Ascending aorta (tissue), 2 donors: ENCODE measurements at regions of chr6 and their contacts with region 1.

Region 1: DNA sequence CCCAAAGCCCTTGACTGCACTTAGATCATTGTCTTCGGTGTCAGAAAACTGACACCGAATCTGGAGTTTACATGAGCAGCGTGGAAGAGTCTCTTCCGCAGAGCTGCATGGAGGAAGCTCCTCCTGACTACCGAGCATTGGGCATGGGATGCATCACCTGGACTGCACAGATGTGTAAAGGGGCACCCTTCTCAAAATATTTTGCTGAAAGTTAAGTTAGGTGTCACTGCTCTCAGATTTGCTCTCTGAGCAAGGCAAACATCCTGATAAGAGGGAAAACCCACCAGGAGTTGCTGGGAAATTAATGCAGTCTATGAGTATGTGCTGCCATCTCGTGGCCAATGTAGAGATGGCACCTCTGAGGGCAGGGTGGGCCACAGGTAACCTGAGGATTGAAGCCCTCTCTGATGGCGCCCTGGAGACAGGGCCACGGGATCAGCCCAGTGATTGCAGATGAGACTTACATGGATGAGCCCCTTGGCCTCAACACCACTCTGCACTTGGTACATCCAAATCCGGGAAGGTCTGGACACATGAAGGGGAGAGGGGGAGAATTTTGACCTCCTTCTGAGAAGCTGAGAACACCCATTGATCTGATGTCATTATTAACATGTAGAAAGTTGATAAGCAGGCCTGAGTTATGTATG is 129.9 kb downstream of the LPA start:
- DNase-seq: peak in 1 of 2 donors; percentile 80
- H3K4me3 ChIP-seq: peak overlapping the region in 1 of 2 donors; percentile 39
- H3K27ac ChIP-seq: no peak overlapping the region
- H3K4me1 ChIP-seq: peaks cover 0 to 3% of the 10 kb centered on the region in 2 donors
- H3K27me3 ChIP-seq: no peaks in the 10 kb centered on the region
- CTCF ChIP-seq: peak; percentile 75 to 96 (median 87)

Region 2: GRCh38 chr6:160520043-160520904 is 13.9 kb before region 1 on chr6:
- intact Hi-C with region 1: loop called (anchors 1 kb)
- DNase-seq: peak in 1 of 2 donors; percentile 89
- H3K4me3 ChIP-seq: peak overlapping the region; percentile 63 to 93
- H3K27ac ChIP-seq: peak overlapping the region; percentile 73 to 85
- H3K4me1 ChIP-seq: no peaks in the 10 kb centered on the region
- H3K27me3 ChIP-seq: no peaks in the 10 kb centered on the region
- CTCF ChIP-seq: no peak

Region 3: DNA sequence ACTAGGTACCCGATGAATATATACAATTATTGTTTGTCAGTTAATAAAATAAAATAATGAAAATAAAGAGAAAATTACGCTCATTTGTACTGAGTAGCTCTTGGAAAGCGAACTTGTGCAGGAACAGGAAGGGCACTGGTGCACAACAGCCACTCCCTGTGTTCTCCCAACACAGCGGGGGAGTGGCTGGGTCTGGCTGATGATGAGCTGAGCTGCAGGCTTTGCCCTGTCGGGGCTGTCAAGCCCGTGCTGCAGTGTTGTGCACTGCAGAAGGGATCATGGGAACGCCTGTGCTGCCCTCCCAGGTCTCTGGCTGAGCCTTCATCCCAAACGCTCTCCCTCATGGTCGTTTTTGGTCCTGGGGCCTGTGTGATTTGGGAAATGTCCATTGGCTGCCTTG is 325.6 kb after region 1 on chr6:
- intact Hi-C with region 1: no loop called
- DNase-seq: no peak
- H3K4me3 ChIP-seq: no peak overlapping the region
- H3K27ac ChIP-seq: no peak overlapping the region
- H3K4me1 ChIP-seq: no peaks in the 10 kb centered on the region
- H3K27me3 ChIP-seq: no peaks in the 10 kb centered on the region
- CTCF ChIP-seq: no peak